MCF 10A (cell line): ENCODE measurements at regions of chr15 and their contacts with region 1.

Region 1: GRCh38 chr15:92077353-92078085 is 224.0 kb downstream of the SLCO3A1 start:
- DNase-seq: peak; percentile 79
- H3K4me3 Mint-ChIP-seq: no peak overlapping the region
- H3K27ac Mint-ChIP-seq: no peak overlapping the region
- H3K4me1 Mint-ChIP-seq: peaks cover 6% of the 10 kb centered on the region
- H3K27me3 Mint-ChIP-seq: no peaks in the 10 kb centered on the region
- CTCF ChIP-seq: peak; percentile 83

Region 2: DNA sequence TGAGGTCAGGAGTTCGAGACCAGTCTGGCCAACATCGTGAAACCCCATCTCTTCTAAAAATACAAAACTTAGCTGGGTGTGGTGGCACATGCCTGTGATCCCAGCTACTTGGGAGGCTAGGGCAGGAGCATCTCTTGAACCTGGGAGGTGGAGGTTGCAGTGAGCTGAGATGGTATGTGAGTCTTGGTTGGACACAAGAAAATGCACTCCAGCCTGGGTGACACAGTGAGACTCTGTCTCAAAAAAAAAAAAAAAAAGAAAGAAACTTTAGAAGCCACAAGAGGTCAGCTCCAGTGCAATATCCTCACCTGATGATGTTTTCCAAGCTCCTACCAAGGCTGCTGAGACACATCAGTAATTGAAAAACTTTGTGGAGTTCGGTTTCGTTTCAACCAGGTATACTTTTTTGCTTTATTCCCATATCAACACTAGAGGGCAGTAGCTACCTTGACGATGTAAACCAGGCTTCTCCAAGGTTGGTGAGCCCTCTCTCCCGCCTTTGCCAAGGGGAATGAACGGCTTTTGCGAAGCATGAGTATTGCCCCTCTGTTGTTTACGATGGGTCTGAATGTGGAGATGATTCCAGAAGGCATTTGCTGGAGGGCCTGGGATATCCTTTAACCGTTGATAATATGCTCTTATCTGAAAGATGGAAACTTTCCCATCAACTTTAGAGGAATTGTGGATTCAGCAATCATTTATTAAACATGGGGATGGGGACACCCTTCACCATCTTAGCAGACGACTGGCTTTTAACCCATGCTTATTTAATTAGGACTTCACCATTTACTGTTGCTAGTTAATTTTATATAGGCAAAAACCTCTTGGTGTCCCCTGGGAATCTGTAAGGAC is 774.7 kb before region 1 on chr15:
- CTCF ChIA-PET with region 1: interaction called, 105 read pairs
- POLR2A ChIA-PET with region 1: interaction called, 4 read pairs
- intact Hi-C with region 1: loop called (anchors 1 kb)
- DNase-seq: peak; percentile 77
- H3K4me3 Mint-ChIP-seq: no peak overlapping the region
- H3K27ac Mint-ChIP-seq: no peak overlapping the region
- H3K4me1 Mint-ChIP-seq: no peaks in the 10 kb centered on the region
- H3K27me3 Mint-ChIP-seq: peaks cover 81% of the 10 kb centered on the region
- CTCF ChIP-seq: peak; percentile 75

Region 3: GRCh38 chr15:91706322-91707032 is 371.0 kb before region 1 on chr15:
- CTCF ChIA-PET with region 1: interaction called, 7 read pairs
- POLR2A ChIA-PET with region 1: no interaction called
- intact Hi-C with region 1: loop called (anchors 1 kb)
- DNase-seq: peak; percentile 81
- H3K4me3 Mint-ChIP-seq: no peak overlapping the region
- H3K27ac Mint-ChIP-seq: no peak overlapping the region
- H3K4me1 Mint-ChIP-seq: peaks cover 15% of the 10 kb centered on the region
- H3K27me3 Mint-ChIP-seq: peaks cover 9% of the 10 kb centered on the region
- CTCF ChIP-seq: peak; percentile 80

Region 4: GRCh38 chr15:91965501-91966184 is 111.9 kb before region 1 on chr15:
- CTCF ChIA-PET with region 1: interaction called, 4 read pairs
- POLR2A ChIA-PET with region 1: interaction called, 3 read pairs
- intact Hi-C with region 1: loop called (anchors 5 kb)
- DNase-seq: peak; percentile 98
- H3K4me3 Mint-ChIP-seq: peak overlapping the region; percentile 60
- H3K27ac Mint-ChIP-seq: peak overlapping the region; percentile 96
- H3K4me1 Mint-ChIP-seq: peaks cover 47% of the 10 kb centered on the region
- H3K27me3 Mint-ChIP-seq: no peaks in the 10 kb centered on the region
- CTCF ChIP-seq: no peak

Region 5: DNA sequence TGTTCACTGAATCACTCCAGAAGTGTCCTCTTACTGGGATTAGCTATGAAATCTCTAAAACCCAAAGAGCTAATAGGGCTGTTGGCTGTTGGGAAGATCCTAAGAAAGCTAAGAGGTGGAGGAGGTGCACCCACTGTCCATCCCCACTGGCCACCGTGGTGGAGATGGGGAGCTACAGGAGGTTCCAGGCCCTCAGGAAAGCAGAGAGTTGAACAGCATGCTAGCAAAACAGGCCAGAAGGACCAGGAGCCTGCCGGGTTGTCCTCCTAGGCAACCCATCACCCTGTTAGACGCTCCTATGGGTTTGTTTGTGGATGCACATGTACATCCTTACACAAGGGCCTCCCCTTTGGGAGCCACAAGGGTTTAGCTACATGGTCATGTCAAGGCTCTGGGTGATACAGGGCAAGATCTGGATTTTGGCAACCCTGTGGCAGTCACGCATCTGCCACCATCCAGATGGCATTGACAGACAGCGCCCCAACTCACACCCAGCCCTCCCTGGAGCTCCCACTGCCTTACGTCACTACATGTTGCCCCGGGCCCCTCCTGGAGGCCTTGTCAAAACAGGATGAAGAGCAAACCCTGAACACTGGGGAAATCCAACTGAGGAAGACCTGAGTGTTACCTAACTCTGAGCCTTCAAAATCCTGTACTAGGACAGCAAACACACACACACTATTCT is 15.9 kb before region 1 on chr15:
- CTCF ChIA-PET with region 1: interaction called, 16 read pairs
- POLR2A ChIA-PET with region 1: no interaction called
- intact Hi-C with region 1: no loop called
- DNase-seq: no peak
- H3K4me3 Mint-ChIP-seq: no peak overlapping the region
- H3K27ac Mint-ChIP-seq: no peak overlapping the region
- H3K4me1 Mint-ChIP-seq: peaks cover 10% of the 10 kb centered on the region
- H3K27me3 Mint-ChIP-seq: no peaks in the 10 kb centered on the region
- CTCF ChIP-seq: no peak

Region 6: GRCh38 chr15:92268906-92269305 is 191.4 kb after region 1 on chr15:
- CTCF ChIA-PET with region 1: no interaction called
- POLR2A ChIA-PET with region 1: no interaction called
- intact Hi-C with region 1: no loop called
- DNase-seq: no peak
- H3K4me3 Mint-ChIP-seq: no peak overlapping the region
- H3K27ac Mint-ChIP-seq: no peak overlapping the region
- H3K4me1 Mint-ChIP-seq: no peaks in the 10 kb centered on the region
- H3K27me3 Mint-ChIP-seq: peaks cover 59% of the 10 kb centered on the region
- CTCF ChIP-seq: no peak